PC-3 (cell line): ENCODE measurements at regions of chr19 and their contacts with region 1.

Region 1: GRCh38 chr19:732148-733069 is 18.5 kb upstream of the MISP start:
- DNase-seq: no peak
- ATAC-seq: no peak
- H3K4me3 ChIP-seq: no peak overlapping the region
- H3K27ac ChIP-seq: no peak overlapping the region
- H3K4me1 ChIP-seq: no peaks in the 10 kb centered on the region
- H3K27me3 ChIP-seq: no peaks in the 10 kb centered on the region
- CTCF ChIP-seq: no peak

Region 2: DNA sequence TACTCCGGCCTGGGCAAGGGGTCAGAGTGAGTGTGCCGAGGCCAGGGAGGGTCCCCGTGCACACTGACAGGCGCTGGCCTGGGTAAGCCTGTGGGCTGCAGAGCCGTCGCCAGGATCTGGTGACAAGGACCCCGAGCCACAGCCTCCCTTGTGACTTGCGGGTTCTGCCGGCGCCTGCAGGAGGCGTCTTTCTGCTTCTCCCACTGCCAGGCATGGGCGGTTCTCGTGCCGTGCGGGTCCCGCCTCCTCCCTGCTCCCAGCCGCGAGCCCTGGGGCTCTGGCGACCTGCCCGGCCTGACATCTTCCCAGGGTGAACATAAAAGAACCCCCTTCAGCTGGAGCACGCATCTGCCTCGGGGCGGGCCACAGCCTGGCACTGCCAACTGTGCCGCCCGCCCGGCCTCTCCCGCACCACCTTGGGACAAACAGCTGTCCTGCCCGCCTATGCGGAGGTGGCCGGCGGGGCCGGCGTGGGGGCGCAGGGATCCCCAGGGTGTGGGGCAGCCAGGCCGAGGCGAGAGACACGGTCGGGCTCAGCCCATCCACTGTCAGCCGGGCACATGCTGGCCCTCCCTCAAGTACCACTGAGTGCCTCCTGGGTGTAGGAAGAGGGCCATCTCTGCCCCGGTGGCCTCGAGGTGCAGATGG is 144.2 kb before region 1 on chr19:
- CTCF ChIA-PET with region 1: interaction called, 3 read pairs
- POLR2A ChIA-PET with region 1: no interaction called
- intact Hi-C with region 1: loop called (anchors 5 kb)
- DNase-seq: peak; percentile 78
- ATAC-seq: peak; percentile 33
- H3K4me3 ChIP-seq: peak overlapping the region; percentile 38; the same call in 1 of the 2 replicates
- H3K27ac ChIP-seq: no peak overlapping the region
- H3K4me1 ChIP-seq: peaks cover 10% of the 10 kb centered on the region
- H3K27me3 ChIP-seq: peaks cover 7% of the 10 kb centered on the region; the same call in 1 of the 2 replicates
- CTCF ChIP-seq: peak; percentile 64

Region 3: GRCh38 chr19:664913-665443 is 67.4 kb before region 1 on chr19:
- CTCF ChIA-PET with region 1: no interaction called
- POLR2A ChIA-PET with region 1: no interaction called
- intact Hi-C with region 1: loop called (anchors 2 kb)
- DNase-seq: peak; percentile 82
- ATAC-seq: peak; percentile 15
- H3K4me3 ChIP-seq: peak overlapping the region; percentile 43; the same call in 1 of the 2 replicates
- H3K27ac ChIP-seq: no peak overlapping the region
- H3K4me1 ChIP-seq: peaks cover 21% of the 10 kb centered on the region
- H3K27me3 ChIP-seq: no peaks in the 10 kb centered on the region
- CTCF ChIP-seq: peak; percentile 73